ENCODE measurements at regions of chr10 and their contacts with region 1.

Region 1: DNA sequence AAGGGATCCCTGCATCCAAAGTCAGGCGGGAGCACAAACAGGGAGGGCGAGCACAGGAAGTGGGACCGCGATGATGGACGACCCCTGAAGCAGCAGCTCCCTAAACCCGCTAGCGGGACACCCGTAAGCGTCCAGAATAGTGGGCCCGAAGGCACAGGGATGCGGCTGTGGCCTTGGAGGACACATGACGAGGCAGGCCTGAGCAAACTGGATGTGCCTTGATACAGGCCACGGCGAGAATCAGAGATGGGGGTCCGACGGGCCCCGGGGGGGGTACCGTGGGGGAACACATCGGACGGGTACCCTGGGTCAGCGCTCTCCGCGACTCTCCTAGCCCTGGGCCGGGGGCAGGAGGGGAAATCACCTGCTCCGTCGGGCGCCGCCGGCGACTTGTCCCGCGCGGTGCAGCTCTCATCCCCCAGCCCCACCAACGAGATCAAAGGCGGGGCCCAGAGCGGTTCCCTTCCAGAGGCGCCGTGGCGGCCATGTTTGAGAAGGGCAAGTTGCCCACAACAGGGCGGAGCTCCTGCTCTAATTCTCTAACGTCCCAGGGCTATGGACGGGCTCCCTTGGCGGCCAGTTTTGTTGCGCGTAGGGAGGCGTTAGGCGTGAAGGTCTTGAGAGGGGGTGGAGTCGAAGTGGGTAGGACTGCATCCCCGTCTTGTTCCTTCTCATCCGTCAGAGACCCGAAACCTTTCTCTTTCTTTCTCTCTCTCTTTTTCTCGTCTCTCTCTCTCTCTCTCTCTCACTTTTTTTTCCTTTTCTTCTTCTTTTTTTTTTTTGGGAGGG is at the start of gene CUEDC2:
- DNase-seq: peak; percentile 86 to 97 (median 91)
- ATAC-seq: peak; percentile 98
- H3K4me3 ChIP-seq: peak within 1 kb of the TSS; percentile 96
- H3K4me3 Mint-ChIP-seq: peak within 1 kb of the TSS; percentile 81 to 96 (median 93)
- H3K27ac ChIP-seq: peak within 1 kb of the TSS; percentile 80
- H3K27ac Mint-ChIP-seq: peak within 1 kb of the TSS; percentile 90 to 97 (median 94)
- H3K4me1 ChIP-seq: peaks cover 28 to 49% of the 10 kb centered on the region in 2 donors
- H3K4me1 Mint-ChIP-seq: peaks cover 38 to 60% (median 48%) of the 10 kb centered on the region in 7 donors
- H3K27me3 ChIP-seq: no peaks in the 10 kb centered on the region
- H3K27me3 Mint-ChIP-seq: no peaks in the 10 kb centered on the region
- total RNA-seq, gene CUEDC2: 27.0 to 69.0 (median 31.9) TPM

Region 2: DNA sequence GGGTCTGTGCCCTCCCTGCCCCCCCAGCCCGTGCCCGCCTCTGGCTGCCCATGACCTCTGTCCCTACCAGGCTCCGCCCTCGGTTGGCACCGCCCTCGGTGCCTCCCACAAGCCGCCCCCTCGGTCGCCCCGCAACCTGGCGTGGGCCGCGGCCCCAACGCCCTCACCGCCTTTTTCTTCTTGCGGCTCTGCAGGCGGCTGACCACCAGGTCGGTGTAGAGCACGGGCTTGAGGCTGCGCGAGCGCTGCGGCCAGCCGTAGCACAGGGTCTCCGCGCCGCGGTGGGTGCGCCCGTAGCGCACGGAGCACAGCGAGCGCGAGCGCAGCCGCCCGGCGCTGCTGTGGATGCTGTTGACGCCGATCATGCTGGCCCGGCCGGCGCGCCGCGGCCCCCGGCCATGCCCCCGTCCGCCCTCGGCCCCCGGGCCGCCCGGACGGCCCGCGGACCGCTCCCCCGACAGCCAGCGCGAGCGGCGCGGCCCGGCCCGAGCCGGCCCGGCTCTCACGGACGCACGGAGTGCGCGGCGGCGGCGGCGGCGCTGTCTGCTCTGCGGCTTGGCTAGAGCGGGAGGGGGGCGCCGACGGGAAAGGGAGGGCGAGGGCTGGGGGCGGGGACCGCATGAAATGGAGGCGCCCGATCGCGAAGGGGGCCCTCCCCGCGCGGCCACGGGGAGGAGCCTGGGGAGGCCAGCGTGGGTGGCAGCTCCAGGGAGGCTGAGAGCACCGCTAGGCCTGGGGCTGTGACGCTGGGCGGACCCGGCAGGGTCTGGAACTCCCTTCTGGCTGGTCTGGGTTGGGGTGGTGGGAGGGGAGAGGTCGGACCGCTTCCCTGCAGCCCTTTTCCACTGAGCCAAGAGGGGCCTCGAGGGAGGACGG is 23.4 kb before region 1 on chr10:
- CTCF ChIA-PET with region 1: interaction called, 5 read pairs
- POLR2A ChIA-PET with region 1: interaction called, 11 read pairs
- intact Hi-C with region 1: no loop called
- DNase-seq: peak; percentile 53 to 88 (median 76)
- ATAC-seq: peak; percentile 79
- H3K4me3 ChIP-seq: peak overlapping the region; percentile 66
- H3K4me3 Mint-ChIP-seq: peak overlapping the region; percentile 73 to 91 (median 87)
- H3K27ac ChIP-seq: peak overlapping the region; percentile 72
- H3K27ac Mint-ChIP-seq: peak overlapping the region; percentile 42 to 92 (median 87)
- H3K4me1 ChIP-seq: peaks cover 5 to 36% of the 10 kb centered on the region in 2 donors
- H3K4me1 Mint-ChIP-seq: peaks cover 22 to 50% (median 42%) of the 10 kb centered on the region in 7 donors
- H3K27me3 ChIP-seq: peaks cover 0 to 12% of the 10 kb centered on the region in 2 donors
- H3K27me3 Mint-ChIP-seq: peaks cover 0 to 32% (median 18%) of the 10 kb centered on the region in 5 donors

Region 3: GRCh38 chr10:102461187-102462054 is 29.1 kb after region 1 on chr10:
- CTCF ChIA-PET with region 1: interaction called, 3 read pairs
- POLR2A ChIA-PET with region 1: interaction called, 6 read pairs
- intact Hi-C with region 1: loop called (anchors 1 kb)
- DNase-seq: peak; percentile 84 to 95 (median 90)
- ATAC-seq: peak; percentile 99
- H3K4me3 ChIP-seq: peak overlapping the region; percentile 93
- H3K4me3 Mint-ChIP-seq: peak overlapping the region; percentile 83 to 96 (median 92)
- H3K27ac ChIP-seq: peak overlapping the region; percentile 74
- H3K27ac Mint-ChIP-seq: peak overlapping the region; percentile 72 to 90 (median 85)
- H3K4me1 ChIP-seq: peaks cover 9 to 14% of the 10 kb centered on the region in 2 donors
- H3K4me1 Mint-ChIP-seq: peaks cover 19 to 40% (median 34%) of the 10 kb centered on the region in 7 donors
- H3K27me3 ChIP-seq: no peaks in the 10 kb centered on the region
- H3K27me3 Mint-ChIP-seq: peaks cover 0 to 2% (median 0%) of the 10 kb centered on the region in 5 donors

Region 4: DNA sequence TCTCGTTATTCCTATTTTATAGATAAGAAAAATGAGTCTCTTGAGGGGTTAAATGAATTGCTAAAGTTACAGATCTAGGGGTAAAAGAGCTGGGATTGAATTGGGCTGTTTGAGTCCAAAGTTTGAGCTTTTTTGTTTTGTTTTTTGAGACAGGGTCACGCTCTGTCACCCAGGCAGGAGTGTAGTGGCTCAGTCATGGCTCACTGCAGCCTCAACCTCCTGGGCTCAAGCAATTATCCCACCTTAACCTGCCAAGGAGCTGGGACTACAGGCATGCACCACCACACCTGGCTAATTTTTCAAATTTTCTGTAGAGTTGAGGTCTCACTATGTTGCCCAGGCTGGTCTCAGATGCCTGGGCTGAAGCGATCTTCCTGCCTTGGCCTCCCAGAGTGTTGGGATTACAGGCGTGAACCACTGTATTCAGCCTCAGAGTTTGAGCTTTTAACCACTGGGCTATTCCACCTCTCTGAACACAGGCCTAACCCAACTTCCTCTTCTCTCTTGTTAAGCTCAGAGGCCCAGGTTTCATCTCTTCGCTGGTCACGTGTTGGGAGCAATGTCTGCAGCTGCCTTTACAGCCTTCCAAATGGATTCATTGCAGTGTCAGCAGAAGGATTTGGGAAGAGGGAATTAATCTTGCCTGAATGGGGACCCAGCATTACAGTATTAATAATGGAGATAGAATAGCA is 79.4 kb after region 1 on chr10:
- CTCF ChIA-PET with region 1: no interaction called
- POLR2A ChIA-PET with region 1: no interaction called
- intact Hi-C with region 1: no loop called
- DNase-seq: no peak
- ATAC-seq: peak; percentile 63
- H3K4me3 ChIP-seq: no peak overlapping the region
- H3K4me3 Mint-ChIP-seq: no peak overlapping the region
- H3K27ac ChIP-seq: no peak overlapping the region
- H3K27ac Mint-ChIP-seq: peak overlapping the region in 8 of 9 donors; percentile 3 to 86 (median 60)
- H3K4me1 ChIP-seq: peaks cover 0 to 8% of the 10 kb centered on the region in 2 donors
- H3K4me1 Mint-ChIP-seq: peaks cover 12 to 35% (median 28%) of the 10 kb centered on the region in 7 donors
- H3K27me3 ChIP-seq: no peaks in the 10 kb centered on the region
- H3K27me3 Mint-ChIP-seq: no peaks in the 10 kb centered on the region

Measured in naive thymus-derived CD4-positive, alpha-beta T cell (primary cell).